Colonic mucosa (tissue), 4 donors: ENCODE measurements at regions of chr3 and their contacts with region 1.

Region 1: GRCh38 chr3:178443634-178444033 is 92.6 kb upstream of the KCNMB2 start:
- DNase-seq: no peak
- H3K4me3 ChIP-seq: no peak overlapping the region
- H3K27ac ChIP-seq: no peak overlapping the region
- H3K4me1 ChIP-seq: no peaks in the 10 kb centered on the region
- H3K27me3 ChIP-seq: no peaks in the 10 kb centered on the region
- CTCF ChIP-seq: no peak

Region 2: GRCh38 chr3:178385280-178385952 is 58.2 kb before region 1 on chr3:
- intact Hi-C with region 1: no loop called
- DNase-seq: peak; percentile 34
- H3K4me3 ChIP-seq: no peak overlapping the region
- H3K27ac ChIP-seq: no peak overlapping the region
- H3K4me1 ChIP-seq: no peaks in the 10 kb centered on the region
- H3K27me3 ChIP-seq: no peaks in the 10 kb centered on the region
- CTCF ChIP-seq: peak; percentile 83

Region 3: GRCh38 chr3:178690571-178690970 is 246.9 kb after region 1 on chr3:
- intact Hi-C with region 1: no loop called
- DNase-seq: no peak
- H3K4me3 ChIP-seq: no peak overlapping the region
- H3K27ac ChIP-seq: no peak overlapping the region
- H3K4me1 ChIP-seq: no peaks in the 10 kb centered on the region
- H3K27me3 ChIP-seq: no peaks in the 10 kb centered on the region
- CTCF ChIP-seq: no peak

Region 4: GRCh38 chr3:178966299-178967176 is 522.9 kb after region 1 on chr3:
- intact Hi-C with region 1: loop called (anchors 5 kb)
- DNase-seq: no peak
- H3K4me3 ChIP-seq: no peak overlapping the region
- H3K27ac ChIP-seq: no peak overlapping the region
- H3K4me1 ChIP-seq: no peaks in the 10 kb centered on the region
- H3K27me3 ChIP-seq: no peaks in the 10 kb centered on the region
- CTCF ChIP-seq: peak; percentile 35